Activated naive CD4-positive, alpha-beta T cell treated with anti-CD3 and anti-CD28 coated beads, Interleukin-2, amount 10 ng/mL, durations not matched to agents 7 days and 5 days (primary cell): ENCODE measurements at regions of chr20 and their contacts with region 1.

Region 1: DNA sequence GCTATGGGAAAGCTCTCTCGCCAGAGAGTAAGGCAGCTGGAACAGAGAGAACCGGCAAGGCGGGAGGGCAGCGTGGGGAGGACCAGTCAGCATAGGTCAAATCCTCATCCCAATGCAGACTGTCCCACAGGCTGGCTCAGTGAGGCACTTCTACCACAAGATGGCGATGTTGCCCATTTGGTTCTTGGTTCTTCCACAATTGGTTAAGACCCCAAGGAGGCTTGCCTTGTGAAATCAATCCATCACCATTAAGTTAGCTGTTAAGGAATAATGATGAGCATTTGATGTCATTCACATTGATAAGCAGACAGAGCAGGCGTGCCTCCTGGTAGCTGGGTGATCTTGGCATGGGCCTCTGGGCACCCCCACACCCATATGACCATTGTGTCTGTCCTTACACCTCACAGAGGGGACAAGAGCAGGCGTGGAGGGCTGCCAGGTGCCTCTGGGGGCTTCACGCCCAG is 2.4 kb downstream of the CSTL1 start:
- DNase-seq: peak; percentile 74
- H3K4me3 Mint-ChIP-seq: no peak overlapping the region
- H3K27ac Mint-ChIP-seq: no peak overlapping the region
- H3K4me1 Mint-ChIP-seq: no peaks in the 10 kb centered on the region
- H3K27me3 Mint-ChIP-seq: peaks cover 8% of the 10 kb centered on the region

Region 2: DNA sequence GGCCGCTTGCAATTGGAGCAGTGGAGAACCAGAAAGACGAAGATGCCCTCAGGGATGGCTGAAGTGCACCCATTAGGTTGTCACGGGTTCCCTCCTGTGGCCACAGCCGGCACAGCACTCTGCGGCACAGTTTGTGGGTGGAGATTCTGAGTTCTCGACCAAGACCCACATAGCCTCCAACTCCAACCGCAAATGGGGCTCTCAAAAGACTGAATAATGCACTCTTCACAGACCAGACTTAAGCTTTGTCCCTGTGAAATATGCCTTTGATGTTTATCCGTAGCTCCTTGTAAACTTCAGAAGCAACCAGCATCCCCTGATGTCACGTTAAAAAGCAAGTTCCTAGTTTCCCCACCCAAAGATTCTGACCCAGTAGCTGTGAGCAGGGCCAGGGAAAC is 164.8 kb after region 1 on chr20:
- CTCF ChIA-PET with region 1: interaction called, 37 read pairs
- DNase-seq: peak; percentile 77
- H3K4me3 Mint-ChIP-seq: no peak overlapping the region
- H3K27ac Mint-ChIP-seq: no peak overlapping the region
- H3K4me1 Mint-ChIP-seq: no peaks in the 10 kb centered on the region
- H3K27me3 Mint-ChIP-seq: peaks cover 14% of the 10 kb centered on the region